Activated CD4-positive, alpha-beta T cell treated with anti-CD3 and anti-CD28 coated beads, Interleukin-2, amount 10 ng/mL, durations not matched to agents 24 days and 14 days (primary cell): ENCODE measurements at regions of chr1 and their contacts with region 1.

Region 1: GRCh38 chr1:61077676-61078541 is 4.5 kb upstream of the NFIA start:
- DNase-seq: peak; percentile 96
- H3K4me3 Mint-ChIP-seq: peak overlapping the region; percentile 92
- H3K27ac Mint-ChIP-seq: peak overlapping the region; percentile 86
- H3K4me1 Mint-ChIP-seq: peaks cover 39% of the 10 kb centered on the region
- H3K27me3 Mint-ChIP-seq: peaks cover 50% of the 10 kb centered on the region

Region 2: GRCh38 chr1:61055110-61055614 is 22.7 kb before region 1 on chr1:
- intact Hi-C with region 1: loop called (anchors 1 kb)
- DNase-seq: no peak
- H3K4me3 Mint-ChIP-seq: no peak overlapping the region
- H3K27ac Mint-ChIP-seq: no peak overlapping the region
- H3K4me1 Mint-ChIP-seq: peaks cover 23% of the 10 kb centered on the region
- H3K27me3 Mint-ChIP-seq: peaks cover 80% of the 10 kb centered on the region